ENCODE measurements at regions of chr5 and their contacts with region 1.

Region 1: DNA sequence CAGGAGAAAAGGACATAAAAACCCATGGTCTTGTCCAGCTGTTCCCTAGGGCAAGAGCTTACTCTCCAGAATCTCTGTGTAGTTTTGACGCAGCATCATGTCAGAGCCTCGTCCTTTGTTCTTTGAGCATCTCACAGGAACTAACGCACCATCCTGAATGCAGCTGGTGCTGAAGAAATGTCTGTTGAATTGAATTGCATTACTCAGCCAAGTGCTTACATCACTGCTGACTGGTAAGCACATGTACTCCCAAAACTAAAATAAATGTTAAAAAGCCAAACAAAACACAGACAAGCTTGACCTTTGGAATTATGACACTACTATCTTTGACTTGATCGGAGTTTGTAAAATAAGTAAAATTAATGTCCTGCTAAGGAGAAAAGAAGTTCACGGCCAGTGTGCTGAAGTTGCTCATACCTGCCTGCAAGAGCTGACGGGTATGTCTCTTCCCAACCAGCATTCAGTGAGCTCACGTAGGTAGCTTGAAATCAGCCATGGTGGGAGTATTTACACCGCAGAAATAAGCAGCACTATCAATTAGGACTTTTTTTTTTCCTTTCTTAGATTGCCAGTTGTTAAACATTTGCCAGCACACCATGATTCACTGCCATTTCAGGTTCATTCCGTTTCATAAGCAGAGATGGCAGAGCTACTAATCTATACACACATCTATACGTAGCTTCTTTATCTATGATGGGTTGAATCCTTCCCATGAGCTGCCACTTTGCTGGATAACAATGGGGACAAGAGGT is 310.6 kb upstream of the MSX2 start:
- DNase-seq: no peak

Region 2: GRCh38 chr5:174348311-174348981 is 65.3 kb before region 1 on chr5:
- intact Hi-C with region 1: no loop called
- DNase-seq: no peak

Region 3: GRCh38 chr5:174793684-174794328 is 380.1 kb after region 1 on chr5:
- intact Hi-C with region 1: loop called in 1 of 2 experiments (anchors 2 kb)
- DNase-seq: peak; percentile 85

Region 4: GRCh38 chr5:175123542-175123941 is 709.8 kb after region 1 on chr5:
- intact Hi-C with region 1: no loop called
- DNase-seq: no peak

Region 5: GRCh38 chr5:176152191-176152929 is 1738.6 kb after region 1 on chr5:
- intact Hi-C with region 1: loop called in 1 of 2 experiments (anchors 5 kb)
- DNase-seq: no peak

Measured in posterior vena cava (tissue), 2 donors.